ENCODE measurements at regions of chr5 and their contacts with region 1.

Region 1: GRCh38 chr5:177113566-177114424 is 19.8 kb upstream of the NSD1 start:
- DNase-seq: peak; percentile 88
- ATAC-seq: peak; percentile 49
- H3K4me3 Mint-ChIP-seq: no peak overlapping the region
- H3K27ac Mint-ChIP-seq: peak overlapping the region; percentile 11
- H3K4me1 Mint-ChIP-seq: peaks cover 15% of the 10 kb centered on the region
- H3K27me3 Mint-ChIP-seq: no peaks in the 10 kb centered on the region

Region 2: GRCh38 chr5:176810084-176810597 is 303.7 kb before region 1 on chr5 and contains the start of gene UNC5A:
- CTCF ChIA-PET with region 1: no interaction called
- POLR2A ChIA-PET with region 1: no interaction called
- intact Hi-C with region 1: loop called in 1 of 2 experiments (anchors 5 kb)
- DNase-seq: peak; percentile 80
- ATAC-seq: peak; percentile 61
- H3K4me3 Mint-ChIP-seq: peak within 1 kb of the TSS; percentile 43
- H3K27ac Mint-ChIP-seq: no peak within 1 kb of the TSS
- H3K4me1 Mint-ChIP-seq: peaks cover 8% of the 10 kb centered on the region
- H3K27me3 Mint-ChIP-seq: peaks cover 57% of the 10 kb centered on the region
- total RNA-seq, gene UNC5A: not detected

Region 3: GRCh38 chr5:176908675-176909368 is 205.0 kb before region 1 on chr5:
- CTCF ChIA-PET with region 1: no interaction called
- POLR2A ChIA-PET with region 1: no interaction called
- intact Hi-C with region 1: no loop called
- DNase-seq: no peak
- ATAC-seq: no peak
- H3K4me3 Mint-ChIP-seq: no peak overlapping the region
- H3K27ac Mint-ChIP-seq: peak overlapping the region; percentile 12
- H3K4me1 Mint-ChIP-seq: peaks cover 15% of the 10 kb centered on the region
- H3K27me3 Mint-ChIP-seq: no peaks in the 10 kb centered on the region

Region 4: GRCh38 chr5:177124486-177124991 is 10.7 kb after region 1 on chr5:
- CTCF ChIA-PET with region 1: interaction called, 16 read pairs
- POLR2A ChIA-PET with region 1: no interaction called
- intact Hi-C with region 1: no loop called
- DNase-seq: no peak
- ATAC-seq: peak; percentile 62
- H3K4me3 Mint-ChIP-seq: no peak overlapping the region
- H3K27ac Mint-ChIP-seq: no peak overlapping the region
- H3K4me1 Mint-ChIP-seq: peaks cover 16% of the 10 kb centered on the region
- H3K27me3 Mint-ChIP-seq: no peaks in the 10 kb centered on the region

Region 5: DNA sequence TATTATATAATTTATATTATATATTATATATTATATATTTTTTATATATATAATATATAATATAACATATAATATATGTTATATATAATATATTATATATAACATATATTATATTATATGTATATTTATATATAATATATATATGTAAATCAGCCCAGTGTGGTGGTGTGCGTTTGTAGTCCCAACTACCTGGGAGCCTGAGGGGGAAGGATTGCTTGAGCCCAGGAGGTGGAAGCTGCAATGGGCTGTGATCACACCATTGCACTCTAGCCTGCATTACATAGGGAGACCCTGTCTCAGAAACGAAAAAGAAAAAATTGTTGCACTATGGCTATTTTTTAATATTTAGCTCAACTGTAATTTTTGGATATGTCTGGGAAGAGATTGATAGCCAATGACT is 72.2 kb after region 1 on chr5:
- CTCF ChIA-PET with region 1: interaction called, 10 read pairs
- POLR2A ChIA-PET with region 1: no interaction called
- intact Hi-C with region 1: no loop called
- DNase-seq: no peak
- ATAC-seq: no peak
- H3K4me3 Mint-ChIP-seq: no peak overlapping the region
- H3K27ac Mint-ChIP-seq: no peak overlapping the region
- H3K4me1 Mint-ChIP-seq: peaks cover 27% of the 10 kb centered on the region
- H3K27me3 Mint-ChIP-seq: no peaks in the 10 kb centered on the region

Region 6: DNA sequence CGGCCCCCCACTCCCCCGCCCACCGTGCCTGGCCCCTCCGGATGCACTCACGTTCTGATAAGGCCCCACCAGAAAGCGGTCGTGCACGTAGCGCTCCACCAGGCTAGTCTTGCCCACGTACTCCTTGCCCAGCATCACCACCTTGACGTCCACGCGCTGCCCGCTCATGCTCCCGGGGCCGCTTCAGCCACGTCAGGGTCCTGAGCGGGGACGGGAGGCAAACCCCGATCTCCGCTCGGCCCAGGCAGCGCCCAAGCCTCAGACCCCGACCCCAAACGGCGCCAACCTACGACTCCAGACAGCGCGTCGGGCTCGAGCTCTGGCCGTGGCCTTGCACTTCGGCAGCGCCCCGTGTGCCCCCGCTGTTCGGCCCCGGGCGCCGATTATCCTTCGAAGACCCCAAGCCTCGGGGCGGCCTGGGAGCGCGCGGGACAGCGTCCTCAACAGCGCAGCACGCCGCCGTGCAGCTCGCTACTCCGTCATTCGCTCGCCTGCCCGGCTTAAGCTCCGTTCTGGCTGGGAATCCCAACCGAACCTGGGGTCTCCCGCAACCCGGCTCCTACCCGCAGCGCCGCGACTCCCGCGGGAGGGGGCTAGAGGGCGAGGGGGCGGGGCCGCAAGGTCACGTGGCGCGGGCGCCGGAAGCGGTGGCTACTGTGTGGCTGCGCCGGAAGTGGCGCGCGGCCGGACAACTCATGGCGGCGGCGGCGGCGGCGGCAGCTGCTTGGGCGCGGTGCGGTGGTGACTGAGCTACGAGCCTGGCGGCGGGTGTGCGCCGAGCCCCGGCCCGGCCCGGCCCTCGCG is 189.5 kb after region 1 on chr5 and contains the starts of genes PRELID1 and RAB24:
- CTCF ChIA-PET with region 1: interaction called, 13 read pairs
- POLR2A ChIA-PET with region 1: no interaction called
- intact Hi-C with region 1: loop called (anchors 1 to 2 kb)
- DNase-seq: peak; percentile 95
- ATAC-seq: peak; percentile 69
- H3K4me3 Mint-ChIP-seq: peak within 1 kb of the TSS; percentile 93
- H3K27ac Mint-ChIP-seq: peak within 1 kb of the TSS; percentile 90
- H3K4me1 Mint-ChIP-seq: peaks cover 59% of the 10 kb centered on the region
- H3K27me3 Mint-ChIP-seq: no peaks in the 10 kb centered on the region
- total RNA-seq, gene PRELID1: 266 to 362 TPM
- total RNA-seq, gene RAB24: 10.9 to 21.0 TPM

Region 7: DNA sequence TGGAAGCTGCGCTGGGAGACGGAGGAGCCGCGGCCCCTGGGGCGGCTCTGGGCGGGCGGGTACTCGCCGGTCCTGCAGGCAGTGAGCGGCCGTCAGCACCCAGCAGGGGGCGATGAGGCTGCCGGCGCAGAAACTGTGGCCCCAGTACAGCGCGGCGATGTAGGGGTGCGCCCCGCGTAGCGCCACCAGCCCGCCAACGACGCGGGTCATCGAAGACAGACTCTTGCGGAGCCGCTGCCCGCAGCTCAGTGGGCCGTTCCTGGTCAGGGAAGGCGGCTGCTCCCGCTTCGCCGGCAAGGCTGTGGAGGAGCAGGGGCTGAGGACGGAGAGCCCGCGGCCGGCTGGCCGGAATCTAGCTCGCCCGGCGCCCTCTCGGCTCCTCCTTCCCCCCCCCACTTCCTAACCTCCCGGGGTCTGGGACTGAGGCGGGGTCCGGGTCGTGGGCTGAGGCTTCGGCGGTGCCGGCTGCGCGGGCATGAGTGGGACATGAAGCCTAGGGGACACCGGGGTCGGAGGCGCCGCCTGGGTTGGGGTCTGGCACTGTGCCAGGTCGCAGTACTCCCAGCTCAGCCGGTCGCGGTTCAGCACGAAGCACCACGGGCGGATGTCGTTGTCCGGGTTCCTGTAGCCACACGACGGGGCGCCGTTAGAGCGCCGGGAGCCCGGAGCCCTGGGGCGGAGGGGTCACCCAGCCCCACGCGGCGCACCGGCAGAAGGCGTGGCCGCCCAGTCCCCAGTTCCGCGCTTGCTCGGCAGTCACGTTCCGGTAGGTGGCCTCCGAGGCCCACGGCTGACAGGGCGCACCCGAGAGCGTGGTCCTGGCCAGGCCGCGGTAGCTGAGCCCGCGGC is 290.2 kb after region 1 on chr5:
- CTCF ChIA-PET with region 1: no interaction called
- POLR2A ChIA-PET with region 1: no interaction called
- intact Hi-C with region 1: loop called in 1 of 2 experiments (anchors 1 kb)
- DNase-seq: peak; percentile 91
- ATAC-seq: peak; percentile 84
- H3K4me3 Mint-ChIP-seq: peak overlapping the region; percentile 72
- H3K27ac Mint-ChIP-seq: peak overlapping the region; percentile 42
- H3K4me1 Mint-ChIP-seq: peaks cover 27% of the 10 kb centered on the region
- H3K27me3 Mint-ChIP-seq: peaks cover 14% of the 10 kb centered on the region

Region 8: DNA sequence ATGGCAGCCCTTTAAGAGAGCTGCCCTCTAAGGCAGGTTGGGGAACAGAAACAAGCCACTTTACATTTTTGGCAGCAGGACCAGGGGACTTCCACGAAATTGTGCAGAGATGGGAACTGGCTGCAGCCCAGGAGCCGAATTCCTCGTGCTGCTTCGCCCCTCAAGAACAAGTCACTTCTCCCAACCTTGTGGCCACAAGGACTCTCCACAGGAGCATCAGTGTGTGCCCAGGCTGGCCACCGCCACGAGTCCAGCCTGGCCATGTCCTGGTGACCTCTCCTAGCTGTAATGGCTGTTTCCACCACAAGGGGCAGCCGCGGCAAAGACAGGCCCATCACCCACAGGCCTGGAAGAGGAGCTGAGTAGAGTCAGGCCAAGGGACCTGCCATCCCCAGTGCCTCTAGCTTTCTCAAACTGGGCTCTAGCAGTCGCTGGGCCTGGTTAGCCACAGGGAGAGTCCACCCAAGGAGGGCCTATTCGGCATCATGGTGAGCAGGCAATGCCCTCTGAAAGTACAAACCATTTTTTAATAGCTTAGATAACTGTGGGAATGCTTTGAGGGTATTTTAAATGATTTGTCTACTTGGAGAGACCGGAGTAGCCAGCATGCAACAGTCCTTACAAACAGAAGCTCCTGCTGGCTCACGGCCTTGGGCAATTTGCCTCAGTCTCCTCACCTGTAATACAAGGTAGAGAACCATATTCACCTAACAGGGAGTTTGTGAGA is 1347.4 kb after region 1 on chr5:
- CTCF ChIA-PET with region 1: no interaction called
- POLR2A ChIA-PET with region 1: no interaction called
- intact Hi-C with region 1: no loop called
- DNase-seq: peak; percentile 76
- ATAC-seq: peak; percentile 81
- H3K4me3 Mint-ChIP-seq: no peak overlapping the region
- H3K27ac Mint-ChIP-seq: no peak overlapping the region
- H3K4me1 Mint-ChIP-seq: no peaks in the 10 kb centered on the region
- H3K27me3 Mint-ChIP-seq: no peaks in the 10 kb centered on the region